Heart left ventricle (tissue), 16 donors: ENCODE measurements at regions of chr5 and their contacts with region 1.

Region 1: DNA sequence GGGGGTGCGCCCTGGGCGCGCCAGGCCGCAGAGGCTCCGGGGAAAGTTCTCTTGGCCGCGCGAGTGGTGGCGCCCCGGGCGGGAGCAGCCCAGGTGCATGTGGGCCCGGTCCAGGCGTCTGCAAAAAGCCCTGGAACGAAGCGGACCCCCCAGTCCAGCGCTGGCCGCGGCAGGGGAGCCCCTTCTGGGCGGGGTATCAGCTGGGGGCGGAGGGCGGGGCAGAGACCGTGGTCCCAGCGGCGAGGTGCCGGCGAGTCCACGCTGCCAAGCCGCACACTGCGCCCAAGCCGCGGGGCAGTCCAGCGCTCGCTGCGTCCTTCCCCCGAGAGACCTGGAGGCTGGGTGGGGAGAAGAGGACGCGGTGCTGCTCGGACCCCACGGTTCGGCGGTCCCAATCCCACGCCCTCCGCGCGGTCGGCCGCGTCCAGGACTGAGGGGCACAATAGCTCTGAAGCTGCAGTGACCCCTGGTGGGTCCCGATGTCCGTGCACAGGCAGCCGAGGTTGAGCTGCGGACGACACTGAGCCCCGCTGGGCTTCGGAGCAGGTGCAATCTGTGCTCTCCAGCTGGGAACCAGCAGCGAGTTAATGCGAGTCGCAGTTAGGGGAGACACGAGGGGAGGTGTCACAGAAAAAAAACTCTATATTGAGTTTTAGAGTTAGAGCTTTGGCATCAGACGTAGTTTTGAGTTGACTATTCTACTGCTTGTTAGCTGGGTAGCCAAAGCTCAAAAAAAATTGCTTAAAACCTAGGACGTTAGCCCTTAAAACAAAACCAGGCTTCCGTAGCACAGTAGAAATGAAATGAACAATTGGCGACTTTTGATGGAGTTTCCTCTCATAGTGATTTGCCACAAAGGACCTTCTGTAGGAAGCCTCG is 1.1 kb upstream of the EPB41L4A start:
- DNase-seq: peak; percentile 87 to 92 (median 88)
- ATAC-seq: peak; percentile 92 to 95 (median 92)
- H3K4me3 ChIP-seq: peak overlapping the region; percentile 63 to 97 (median 88)
- H3K27ac ChIP-seq: peak overlapping the region; percentile 72 to 95 (median 92)
- H3K4me1 ChIP-seq: peaks cover 0 to 31% (median 16%) of the 10 kb centered on the region in 12 donors
- H3K27me3 ChIP-seq: peaks cover 0 to 25% (median 0%) of the 10 kb centered on the region in 9 donors
- CTCF ChIP-seq: peak; percentile 81 to 98 (median 93)
- POLR2A ChIP-seq: no peak

Region 2: GRCh38 chr5:112059579-112060135 is 360.6 kb before region 1 on chr5:
- intact Hi-C with region 1: no loop called
- DNase-seq: no peak
- ATAC-seq: peak in 1 of 4 donors; percentile 45
- H3K4me3 ChIP-seq: no peak overlapping the region
- H3K27ac ChIP-seq: no peak overlapping the region
- H3K4me1 ChIP-seq: no peaks in the 10 kb centered on the region
- H3K27me3 ChIP-seq: no peaks in the 10 kb centered on the region
- CTCF ChIP-seq: no peak
- POLR2A ChIP-seq: no peak

Region 3: GRCh38 chr5:112160652-112161391 is 259.4 kb before region 1 on chr5:
- intact Hi-C with region 1: loop called in 1 of 10 experiments (anchors 5 kb)
- DNase-seq: peak; percentile 90 to 95 (median 92)
- ATAC-seq: peak; percentile 88 to 95 (median 94)
- H3K4me3 ChIP-seq: peak overlapping the region; percentile 76 to 98 (median 82)
- H3K27ac ChIP-seq: peak overlapping the region; percentile 72 to 92 (median 86)
- H3K4me1 ChIP-seq: peaks cover 0 to 30% (median 18%) of the 10 kb centered on the region in 12 donors
- H3K27me3 ChIP-seq: no peaks in the 10 kb centered on the region
- CTCF ChIP-seq: peak; percentile 88 to 99 (median 96)
- POLR2A ChIP-seq: peak in 1 of 2 donors; percentile 79

Region 4: GRCh38 chr5:112210430-112211005 is 209.7 kb before region 1 on chr5:
- intact Hi-C with region 1: loop called (anchors 1 to 10 kb)
- DNase-seq: peak in 4 of 5 donors; percentile 14 to 51 (median 26)
- ATAC-seq: peak in 3 of 4 donors; percentile 48 to 70 (median 68)
- H3K4me3 ChIP-seq: no peak overlapping the region
- H3K27ac ChIP-seq: no peak overlapping the region
- H3K4me1 ChIP-seq: peaks cover 0 to 8% (median 0%) of the 10 kb centered on the region in 12 donors
- H3K27me3 ChIP-seq: no peaks in the 10 kb centered on the region
- CTCF ChIP-seq: peak; percentile 35 to 74 (median 66)
- POLR2A ChIP-seq: no peak

Region 5: GRCh38 chr5:112329419-112330090 is 90.7 kb before region 1 on chr5:
- intact Hi-C with region 1: loop called in 1 of 10 experiments (anchors 10 kb)
- DNase-seq: no peak
- ATAC-seq: peak in 2 of 4 donors; percentile 30 to 50
- H3K4me3 ChIP-seq: no peak overlapping the region
- H3K27ac ChIP-seq: peak overlapping the region in 2 of 12 donors; percentile 3 to 14
- H3K4me1 ChIP-seq: peaks cover 0 to 62% (median 40%) of the 10 kb centered on the region in 12 donors
- H3K27me3 ChIP-seq: no peaks in the 10 kb centered on the region
- CTCF ChIP-seq: no peak
- POLR2A ChIP-seq: no peak

Region 6: GRCh38 chr5:112355058-112355685 is 65.1 kb before region 1 on chr5:
- intact Hi-C with region 1: loop called in 1 of 10 experiments (anchors 10 kb)
- DNase-seq: no peak
- ATAC-seq: no peak
- H3K4me3 ChIP-seq: peak overlapping the region in 1 of 12 donors; percentile 17
- H3K27ac ChIP-seq: peak overlapping the region in 1 of 12 donors; percentile 7
- H3K4me1 ChIP-seq: peaks cover 0 to 24% (median 10%) of the 10 kb centered on the region in 12 donors
- H3K27me3 ChIP-seq: no peaks in the 10 kb centered on the region
- CTCF ChIP-seq: no peak
- POLR2A ChIP-seq: no peak

Region 7: GRCh38 chr5:112784726-112785125 is 364.5 kb after region 1 on chr5:
- intact Hi-C with region 1: no loop called
- DNase-seq: no peak
- ATAC-seq: no peak
- H3K4me3 ChIP-seq: no peak overlapping the region
- H3K27ac ChIP-seq: no peak overlapping the region
- H3K4me1 ChIP-seq: no peaks in the 10 kb centered on the region
- H3K27me3 ChIP-seq: no peaks in the 10 kb centered on the region
- CTCF ChIP-seq: no peak
- POLR2A ChIP-seq: no peak